ENCODE measurements at regions of chr11 and their contacts with region 1.

Region 1: GRCh38 chr11:45846974-45847910 is at the start of gene CRY2:
- DNase-seq: peak; percentile 100
- H3K4me3 ChIP-seq: peak within 1 kb of the TSS; percentile 87
- H3K27ac ChIP-seq: peak within 1 kb of the TSS; percentile 88 to 91
- H3K4me1 ChIP-seq: peaks cover 17% of the 10 kb centered on the region
- H3K27me3 ChIP-seq: no peaks in the 10 kb centered on the region
- CTCF ChIP-seq: no peak
- EP300 ChIP-seq: peak; percentile 73
- POLR2A ChIP-seq: peak; percentile 95
- total RNA-seq, gene CRY2: 44.8 to 94.2 (median 70.8) TPM

Region 2: DNA sequence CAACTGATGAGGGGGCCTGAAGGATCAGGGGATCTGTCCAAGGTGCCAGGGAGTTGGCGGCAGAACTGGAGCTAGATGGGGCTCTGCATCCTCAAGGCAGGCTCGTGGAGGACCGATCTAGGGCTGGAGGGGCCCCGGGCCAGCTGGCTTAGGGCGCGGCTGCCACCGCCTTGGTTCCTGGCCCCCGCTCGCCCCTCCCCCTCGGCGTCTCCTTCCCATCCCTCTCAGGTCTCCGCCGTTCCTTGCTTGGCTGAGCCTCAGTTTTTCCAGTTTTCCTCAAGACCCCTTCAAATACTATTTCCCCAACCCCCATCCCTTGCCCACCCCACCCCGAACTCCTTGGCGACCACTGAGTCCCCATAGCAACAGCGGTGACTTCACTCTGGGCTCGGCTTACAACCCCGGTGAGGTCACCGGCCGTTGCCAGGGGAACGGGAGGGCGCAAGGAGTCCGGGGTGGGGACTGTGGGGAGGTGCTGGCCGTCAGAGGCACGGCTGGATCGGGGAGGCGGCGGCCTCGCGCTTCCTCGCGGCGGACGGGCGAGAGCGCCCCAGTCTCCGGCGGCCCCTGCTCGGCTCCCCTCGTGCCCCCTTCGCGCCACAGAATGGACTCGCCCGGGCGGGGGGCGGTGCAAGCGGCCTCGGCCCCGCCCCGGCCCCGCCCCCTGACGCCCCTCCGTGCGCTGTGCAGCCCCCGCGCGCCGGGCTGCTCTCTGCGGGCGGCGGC is 52.4 kb after region 1 on chr11:
- intact Hi-C with region 1: loop called in 1 of 4 experiments (anchors 1 kb)
- DNase-seq: peak; percentile 87 to 94 (median 92)
- H3K4me3 ChIP-seq: peak overlapping the region; percentile 38
- H3K27ac ChIP-seq: peak overlapping the region in 1 of 2 donors; percentile 64
- H3K4me1 ChIP-seq: peaks cover 6% of the 10 kb centered on the region
- H3K27me3 ChIP-seq: no peaks in the 10 kb centered on the region
- CTCF ChIP-seq: no peak
- EP300 ChIP-seq: no peak
- POLR2A ChIP-seq: peak; percentile 56

Region 3: GRCh38 chr11:45917623-45918330 is 70.5 kb after region 1 on chr11 and contains the start of gene PEX16:
- intact Hi-C with region 1: loop called in 2 of 4 experiments (anchors 2 to 5 kb)
- DNase-seq: peak; percentile 96 to 98 (median 98)
- H3K4me3 ChIP-seq: peak within 1 kb of the TSS; percentile 86
- H3K27ac ChIP-seq: peak within 1 kb of the TSS; percentile 16 to 83
- H3K4me1 ChIP-seq: no peaks in the 10 kb centered on the region
- H3K27me3 ChIP-seq: no peaks in the 10 kb centered on the region
- CTCF ChIP-seq: peak in 1 of 3 donors; percentile 14
- EP300 ChIP-seq: peak; percentile 15
- POLR2A ChIP-seq: peak; percentile 86
- total RNA-seq, gene PEX16: 18.7 to 31.7 (median 26.5) TPM

Measured in ovary (tissue), 10 donors.